ENCODE measurements at regions of chr11 and their contacts with region 1.

Region 1: DNA sequence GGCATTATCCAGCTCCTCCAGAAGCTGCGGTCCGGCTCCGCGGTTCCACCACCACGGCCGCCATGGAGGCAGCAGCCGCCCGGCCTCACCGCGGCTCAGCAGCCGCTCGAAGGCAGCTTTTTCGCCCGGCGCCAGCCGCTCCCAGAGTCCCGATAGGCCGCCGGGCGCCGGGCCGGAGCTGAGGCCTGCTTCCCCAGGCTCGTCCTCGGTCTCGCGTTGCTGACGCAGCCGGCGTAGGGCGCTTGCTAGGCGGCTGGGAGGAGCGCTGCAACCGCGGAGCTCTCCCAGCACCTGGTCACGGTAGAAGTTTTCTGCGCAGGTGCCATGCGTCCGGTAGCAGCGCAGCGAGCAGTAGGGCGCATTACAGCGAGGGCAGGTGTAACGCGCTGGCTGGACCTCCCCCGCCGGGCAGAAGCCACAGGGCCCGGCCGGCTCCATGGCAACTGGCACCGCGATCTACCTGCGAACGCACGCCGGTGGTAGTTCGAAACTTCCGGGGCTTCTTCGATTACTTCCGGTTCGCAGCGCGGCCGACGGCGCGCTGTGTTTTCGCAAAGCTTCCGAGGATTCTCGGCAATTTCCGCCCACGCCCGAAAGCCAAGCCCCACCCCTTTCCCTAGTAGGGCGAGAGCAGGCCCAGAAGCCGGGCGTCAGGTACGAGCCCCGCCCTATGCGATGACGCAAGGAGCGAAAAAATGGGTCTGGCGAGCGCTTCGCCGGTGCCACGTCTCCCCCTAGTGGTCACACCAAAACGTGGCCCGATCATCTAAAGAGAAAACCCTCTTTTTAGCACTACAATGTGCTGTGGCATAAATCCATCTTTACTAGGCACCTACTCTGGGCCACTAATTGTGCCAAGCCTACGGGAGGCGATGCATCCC is at the start of gene ZNHIT2:
- DNase-seq: peak; percentile 99 to 100 (median 100)

Region 2: DNA sequence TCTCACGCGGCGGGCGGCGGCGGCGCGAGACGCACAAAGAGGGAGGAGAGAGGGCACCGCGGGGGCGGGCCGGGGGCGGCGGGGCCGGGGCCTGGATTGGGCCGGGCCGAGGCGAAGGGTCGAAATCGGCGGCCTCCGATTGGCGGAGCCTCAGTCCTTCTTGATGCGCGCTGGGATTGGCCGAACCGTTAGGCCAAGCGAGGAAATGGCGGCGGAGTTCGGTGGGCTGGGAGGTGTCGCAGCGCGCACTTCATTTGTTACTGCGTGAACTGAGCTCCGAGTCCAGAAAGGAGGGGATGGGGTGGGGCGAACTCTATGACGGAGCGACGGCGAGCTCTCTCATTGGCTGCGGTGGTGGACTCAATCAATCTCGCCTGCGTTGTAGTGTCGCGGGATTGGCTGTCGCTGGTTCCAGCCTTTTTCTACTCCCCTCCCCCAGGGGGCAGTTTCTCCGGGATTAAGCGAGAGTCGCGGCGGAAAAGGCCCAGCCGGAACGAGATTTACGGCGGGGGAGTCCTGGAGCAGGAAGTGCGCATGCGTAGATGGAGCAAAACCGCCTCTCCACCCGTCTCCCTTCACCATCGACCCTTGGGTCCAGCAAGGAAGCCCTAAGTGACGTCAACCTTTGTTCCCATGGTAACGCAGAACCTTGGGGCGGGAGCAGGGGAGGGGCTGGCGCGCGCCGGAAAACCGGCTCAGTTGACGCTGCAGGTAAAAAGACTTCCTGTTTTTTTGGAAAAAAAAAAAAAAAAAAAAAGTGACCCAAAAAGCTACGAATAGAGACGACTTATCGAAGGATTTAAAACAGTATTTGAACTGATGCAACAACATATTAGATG is 338.7 kb before region 1 on chr11 and contains the start of gene SF1:
- intact Hi-C with region 1: loop called (anchors 5 kb)
- DNase-seq: peak; percentile 99 to 100 (median 100)

Region 3: DNA sequence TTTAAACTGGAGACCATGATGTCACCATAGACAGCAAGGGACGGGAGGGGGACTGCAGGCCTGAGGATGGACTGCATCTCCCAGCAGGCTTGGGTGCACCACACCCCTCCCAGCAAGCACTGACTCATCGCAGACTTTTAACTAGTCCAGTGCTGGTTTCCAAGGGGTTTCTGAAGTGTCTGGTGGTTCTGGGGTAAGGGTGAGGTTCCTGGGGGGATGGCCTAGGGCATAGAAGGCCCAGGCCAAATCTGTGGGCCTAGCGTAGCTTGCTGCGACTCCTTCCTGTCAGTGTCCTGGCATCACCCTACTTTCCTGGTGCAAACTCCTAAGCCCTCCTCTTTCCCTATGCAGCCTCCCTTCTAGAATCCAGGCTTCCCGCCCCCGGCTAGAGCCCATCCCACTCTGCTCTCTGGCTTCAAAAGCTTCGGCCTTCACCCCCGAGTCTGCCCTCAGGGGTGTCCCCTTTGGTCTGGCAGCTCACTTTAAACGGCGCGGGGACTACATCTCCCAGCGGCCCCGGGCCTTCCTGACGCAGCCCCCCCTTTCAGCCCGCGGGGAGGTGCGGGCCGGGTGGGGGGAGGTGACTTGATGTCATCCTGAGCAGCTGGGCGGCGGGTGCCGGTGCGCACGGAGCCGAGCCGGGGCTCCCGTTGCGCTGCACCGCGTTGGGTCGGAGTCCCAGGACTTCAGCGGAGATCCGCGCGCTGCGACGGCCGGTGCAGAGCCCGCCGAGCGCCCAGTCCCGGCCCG is 193.2 kb before region 1 on chr11 and contains the start of gene PPP2R5B:
- intact Hi-C with region 1: loop called (anchors 10 kb)
- DNase-seq: peak; percentile 91 to 99 (median 96)

Region 4: GRCh38 chr11:65083834-65084597 is 33.4 kb before region 1 on chr11 and contains the starts of genes CDCA5 and ZFPL1:
- intact Hi-C with region 1: loop called (anchors 5 kb)
- DNase-seq: peak; percentile 95 to 100 (median 98)

Region 5: DNA sequence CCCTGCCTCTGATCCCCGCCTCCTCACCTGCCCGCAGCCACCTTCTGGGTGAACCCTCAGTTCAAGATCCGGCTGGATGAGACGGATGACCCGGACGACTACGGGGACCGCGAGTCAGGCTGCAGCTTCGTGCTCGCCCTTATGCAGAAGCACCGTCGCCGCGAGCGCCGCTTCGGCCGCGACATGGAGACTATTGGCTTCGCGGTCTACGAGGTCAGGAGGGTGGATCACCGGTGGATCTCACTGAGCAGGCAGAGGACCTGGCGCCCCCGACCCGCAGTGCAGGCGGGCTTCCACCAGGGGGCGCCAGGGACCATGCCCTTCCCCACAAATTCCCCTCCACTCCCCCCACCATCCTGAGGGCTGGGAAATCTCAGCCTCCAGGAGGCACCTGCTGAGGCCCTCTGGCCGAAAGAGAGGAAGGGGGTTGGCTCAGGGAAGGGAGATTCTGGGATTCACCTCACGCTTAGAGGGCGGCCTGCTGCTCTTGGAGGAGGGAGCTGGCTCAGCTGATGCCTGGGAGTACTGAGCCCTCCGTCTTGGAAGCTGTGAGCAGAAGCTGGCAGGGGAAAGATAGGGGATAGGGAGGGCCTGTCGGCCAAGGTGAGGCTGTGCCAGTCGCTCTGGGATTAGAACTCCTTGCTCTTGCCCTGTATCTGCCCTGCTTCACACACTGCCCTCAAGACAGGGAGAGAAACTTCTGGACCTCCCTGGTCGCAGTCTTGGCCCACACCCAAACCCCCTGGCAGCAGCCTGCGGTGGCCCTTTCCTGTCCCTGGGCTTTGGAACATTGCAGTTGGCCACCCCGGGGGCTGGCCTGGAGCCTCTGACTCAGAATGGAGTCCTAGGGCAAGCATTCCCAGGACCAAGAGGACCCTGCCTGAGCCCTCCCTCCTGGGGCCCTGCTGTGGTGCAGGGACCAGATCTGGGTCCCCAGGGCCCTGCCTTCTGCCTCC is 87.5 kb after region 1 on chr11:
- intact Hi-C with region 1: no loop called
- DNase-seq: peak in 6 of 10 donors; percentile 30 to 87 (median 59)

Measured in posterior cingulate gyrus (tissue), 11 donors.